Left cardiac atrium (tissue), 4 donors: ENCODE measurements at regions of chr15 and their contacts with region 1.

Region 1: GRCh38 chr15:84871428-84872305 is 12.8 kb upstream of the SLC28A1 start:
- DNase-seq: no peak
- ATAC-seq: peak in 1 of 2 donors; percentile 4

Region 2: DNA sequence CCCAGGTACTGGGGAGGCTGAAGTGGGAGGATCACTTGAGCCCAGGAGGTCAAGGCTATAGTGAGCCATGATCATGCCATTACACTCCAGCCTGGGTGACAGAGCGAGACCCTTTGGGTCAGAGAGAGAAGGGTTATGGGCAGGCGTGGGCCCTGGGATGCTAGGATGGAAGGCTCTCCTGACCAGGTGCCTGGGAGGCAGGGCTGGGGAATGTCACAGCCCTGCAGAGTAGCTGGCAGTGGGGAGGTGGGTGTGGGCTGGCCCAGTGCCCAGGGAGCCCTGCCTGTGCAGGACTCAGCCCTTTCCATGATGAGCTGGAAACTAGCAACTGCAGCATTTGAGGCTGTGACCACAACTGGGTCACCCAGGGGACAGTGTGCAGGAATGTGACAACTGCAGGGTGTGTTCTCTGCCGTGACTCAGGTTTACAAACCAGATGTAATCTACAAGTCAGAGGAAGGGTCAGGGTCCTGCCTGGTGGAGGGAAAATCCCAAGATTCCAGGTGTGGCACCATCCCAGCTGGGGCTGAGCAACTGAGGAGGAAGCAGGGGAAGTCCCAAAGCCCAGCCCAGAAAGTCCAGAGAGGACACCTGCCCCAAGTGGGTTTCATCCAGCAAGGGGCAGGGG is 58.2 kb after region 1 on chr15:
- intact Hi-C with region 1: loop called (anchors 5 kb)
- DNase-seq: no peak
- ATAC-seq: no peak